ENCODE measurements at regions of chr18 and their contacts with region 1.

Region 1: GRCh38 chr18:754666-755065 is 42.2 kb upstream of the ENOSF1 start:
- DNase-seq: no peak
- ATAC-seq: no peak
- H3K4me3 ChIP-seq: no peak overlapping the region
- H3K4me3 Mint-ChIP-seq: no peak overlapping the region
- H3K27ac ChIP-seq: no peak overlapping the region
- H3K27ac Mint-ChIP-seq: no peak overlapping the region
- H3K4me1 ChIP-seq: no peaks in the 10 kb centered on the region
- H3K4me1 Mint-ChIP-seq: no peaks in the 10 kb centered on the region
- H3K27me3 ChIP-seq: no peaks in the 10 kb centered on the region
- H3K27me3 Mint-ChIP-seq: no peaks in the 10 kb centered on the region

Region 2: DNA sequence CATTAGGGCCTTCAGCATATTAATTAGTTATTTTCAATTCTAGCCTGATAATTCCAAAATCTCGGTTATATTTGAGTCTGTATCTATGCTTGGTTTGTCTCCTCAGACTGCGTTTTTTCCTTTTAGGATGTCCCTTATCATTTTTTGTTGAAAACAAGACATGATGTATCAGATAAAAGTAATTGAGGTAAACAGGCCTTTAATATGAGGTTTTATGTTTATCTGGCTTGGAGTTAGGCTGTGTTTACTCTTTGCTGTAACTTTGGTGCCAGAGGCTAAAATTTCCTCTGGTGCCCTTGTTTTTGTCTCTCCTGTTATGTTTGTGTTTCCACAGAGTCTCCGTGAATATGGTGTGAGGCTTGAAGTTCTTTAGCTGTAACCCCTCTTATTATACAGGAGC is 165.4 kb before region 1 on chr18:
- CTCF ChIA-PET with region 1: no interaction called
- POLR2A ChIA-PET with region 1: no interaction called
- DNase-seq: no peak
- ATAC-seq: no peak
- H3K4me3 ChIP-seq: no peak overlapping the region
- H3K4me3 Mint-ChIP-seq: no peak overlapping the region
- H3K27ac ChIP-seq: no peak overlapping the region
- H3K27ac Mint-ChIP-seq: no peak overlapping the region
- H3K4me1 ChIP-seq: no peaks in the 10 kb centered on the region
- H3K4me1 Mint-ChIP-seq: no peaks in the 10 kb centered on the region
- H3K27me3 ChIP-seq: peaks cover 0 to 12% of the 10 kb centered on the region in 2 experiments
- H3K27me3 Mint-ChIP-seq: peaks cover 3 to 10% of the 10 kb centered on the region in 2 donors

Region 3: DNA sequence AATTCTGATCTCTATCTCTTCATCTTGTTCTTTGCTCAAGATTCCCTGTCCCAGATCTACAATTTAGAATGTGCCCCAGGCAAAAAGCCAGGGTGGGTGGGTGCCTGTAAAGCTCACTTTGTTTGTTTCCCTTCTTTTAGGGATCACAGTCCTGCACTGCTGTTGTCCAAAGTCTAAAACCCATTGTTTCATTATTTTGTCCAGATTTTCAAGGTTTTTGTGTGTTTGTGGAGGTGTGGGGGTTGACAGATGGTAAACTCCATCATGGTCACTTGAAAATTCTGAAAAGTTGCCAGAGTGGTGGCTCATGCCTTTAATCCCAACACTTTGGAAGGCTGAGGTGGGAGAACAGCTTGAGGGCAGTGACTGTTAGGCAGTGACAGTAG is 15.9 kb after region 1 on chr18:
- CTCF ChIA-PET with region 1: interaction called in 1 of 2 experiments, 13 read pairs
- POLR2A ChIA-PET with region 1: no interaction called
- DNase-seq: no peak
- ATAC-seq: no peak
- H3K4me3 ChIP-seq: no peak overlapping the region
- H3K4me3 Mint-ChIP-seq: no peak overlapping the region
- H3K27ac ChIP-seq: no peak overlapping the region
- H3K27ac Mint-ChIP-seq: no peak overlapping the region
- H3K4me1 ChIP-seq: no peaks in the 10 kb centered on the region
- H3K4me1 Mint-ChIP-seq: peaks cover 7 to 24% (median 16%) of the 10 kb centered on the region in 3 donors
- H3K27me3 ChIP-seq: no peaks in the 10 kb centered on the region
- H3K27me3 Mint-ChIP-seq: no peaks in the 10 kb centered on the region

Region 4: GRCh38 chr18:902229-902628 is 147.6 kb after region 1 on chr18:
- CTCF ChIA-PET with region 1: no interaction called
- POLR2A ChIA-PET with region 1: no interaction called
- DNase-seq: no peak
- ATAC-seq: no peak
- H3K4me3 ChIP-seq: no peak overlapping the region
- H3K4me3 Mint-ChIP-seq: no peak overlapping the region
- H3K27ac ChIP-seq: no peak overlapping the region
- H3K27ac Mint-ChIP-seq: no peak overlapping the region
- H3K4me1 ChIP-seq: peaks cover 0 to 10% of the 10 kb centered on the region in 2 experiments
- H3K4me1 Mint-ChIP-seq: peaks cover 12 to 16% (median 14%) of the 10 kb centered on the region in 3 donors
- H3K27me3 ChIP-seq: peaks cover 12 to 52% of the 10 kb centered on the region in 2 experiments
- H3K27me3 Mint-ChIP-seq: peaks cover 66 to 69% of the 10 kb centered on the region in 2 donors